ENCODE measurements at regions of chr1 and their contacts with region 1.

Region 1: GRCh38 chr1:201916649-201917249 is 28.1 kb downstream of the SHISA4 start:
- DNase-seq: peak; percentile 71
- H3K4me3 Mint-ChIP-seq: no peak overlapping the region
- H3K27ac Mint-ChIP-seq: no peak overlapping the region
- H3K4me1 Mint-ChIP-seq: peaks cover 26% of the 10 kb centered on the region
- H3K27me3 Mint-ChIP-seq: peaks cover 22% of the 10 kb centered on the region
- CTCF ChIP-seq: no peak

Region 2: GRCh38 chr1:201933840-201934430 is 17.2 kb after region 1 on chr1:
- CTCF ChIA-PET with region 1: no interaction called
- intact Hi-C with region 1: no loop called
- DNase-seq: no peak
- H3K4me3 Mint-ChIP-seq: no peak overlapping the region
- H3K27ac Mint-ChIP-seq: no peak overlapping the region
- H3K4me1 Mint-ChIP-seq: peaks cover 8% of the 10 kb centered on the region
- H3K27me3 Mint-ChIP-seq: peaks cover 29% of the 10 kb centered on the region
- CTCF ChIP-seq: no peak

Region 3: DNA sequence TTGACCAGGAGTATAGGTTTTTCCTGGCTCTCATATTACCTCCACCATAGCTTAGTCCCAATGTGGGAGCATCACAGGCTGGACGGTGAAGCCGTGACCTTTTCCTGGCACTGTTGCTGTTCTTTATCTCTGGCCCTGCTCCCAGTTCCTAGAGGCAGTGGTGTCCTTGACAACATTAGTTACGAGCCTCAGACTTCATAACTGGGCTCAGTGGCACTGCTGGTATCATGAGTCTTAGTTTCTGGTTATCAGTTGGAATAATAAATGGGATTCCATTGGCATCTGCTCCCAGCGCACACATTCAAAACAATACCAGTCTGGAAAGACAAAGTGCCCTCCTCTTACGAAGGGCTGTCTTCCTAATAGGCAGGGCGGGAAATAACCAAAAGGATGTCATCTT is 73.7 kb after region 1 on chr1:
- CTCF ChIA-PET with region 1: interaction called, 10 read pairs
- intact Hi-C with region 1: no loop called
- DNase-seq: no peak
- H3K4me3 Mint-ChIP-seq: no peak overlapping the region
- H3K27ac Mint-ChIP-seq: no peak overlapping the region
- H3K4me1 Mint-ChIP-seq: no peaks in the 10 kb centered on the region
- H3K27me3 Mint-ChIP-seq: no peaks in the 10 kb centered on the region
- CTCF ChIP-seq: no peak

Measured in Calu3 (cell line).